Naive thymus-derived CD4-positive, alpha-beta T cell (primary cell): ENCODE measurements at regions of chr22 and their contacts with region 1.

Region 1: DNA sequence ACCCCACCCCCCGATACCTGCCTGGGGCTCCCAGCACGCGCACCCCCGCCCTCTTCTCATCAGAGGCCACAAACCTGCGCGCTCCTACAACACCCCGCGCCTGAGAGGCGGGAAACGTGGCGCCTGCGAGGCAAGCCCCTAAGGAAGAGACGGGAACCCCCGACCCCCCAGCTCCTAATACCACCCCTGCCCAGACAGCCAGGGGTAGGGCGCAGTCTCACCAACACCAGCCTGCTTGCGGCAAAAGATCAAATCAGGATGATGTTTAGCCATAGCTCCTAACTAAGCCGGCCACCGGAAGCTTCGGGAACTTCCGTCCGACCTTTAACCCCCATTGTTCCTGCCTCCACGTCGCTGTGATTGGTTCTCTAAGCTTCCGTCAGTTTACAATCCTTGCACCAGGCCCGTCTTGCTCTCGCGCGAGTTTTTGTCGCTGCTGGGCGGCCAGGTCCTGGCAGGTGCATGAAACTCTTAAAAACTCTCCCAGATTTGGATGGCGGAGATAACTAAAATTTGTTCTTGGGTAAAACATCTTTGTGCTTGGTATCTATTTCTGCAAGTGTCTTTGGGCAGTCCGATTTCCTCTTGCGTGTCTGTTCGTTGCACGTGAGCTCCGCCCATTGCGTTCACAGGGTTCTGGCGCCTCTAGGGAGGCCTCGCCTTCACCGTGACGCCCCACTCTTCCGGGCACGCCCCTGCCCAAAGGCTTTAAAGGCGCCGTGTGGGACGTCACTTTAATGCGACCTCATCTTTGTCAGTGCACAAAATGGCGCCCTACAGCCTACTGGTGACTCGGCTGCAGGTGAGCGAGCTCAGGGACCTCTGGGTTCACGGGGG is at the starts of genes ACO2 and PHF5A:
- DNase-seq: peak; percentile 93 to 99 (median 98)
- ATAC-seq: peak; percentile 96
- H3K4me3 ChIP-seq: peak within 1 kb of the TSS; percentile 76
- H3K4me3 Mint-ChIP-seq: peak within 1 kb of the TSS; percentile 88 to 94 (median 91)
- H3K27ac ChIP-seq: peak within 1 kb of the TSS; percentile 89
- H3K27ac Mint-ChIP-seq: peak within 1 kb of the TSS; percentile 98 to 100 (median 99)
- H3K4me1 ChIP-seq: peaks cover 19 to 20% of the 10 kb centered on the region in 2 donors
- H3K4me1 Mint-ChIP-seq: peaks cover 18 to 75% (median 59%) of the 10 kb centered on the region in 7 donors
- H3K27me3 ChIP-seq: no peaks in the 10 kb centered on the region
- H3K27me3 Mint-ChIP-seq: no peaks in the 10 kb centered on the region
- total RNA-seq, gene ACO2: 64.5 to 84.8 (median 70.3) TPM
- total RNA-seq, gene PHF5A: 27.8 to 63.9 (median 36.0) TPM

Region 2: DNA sequence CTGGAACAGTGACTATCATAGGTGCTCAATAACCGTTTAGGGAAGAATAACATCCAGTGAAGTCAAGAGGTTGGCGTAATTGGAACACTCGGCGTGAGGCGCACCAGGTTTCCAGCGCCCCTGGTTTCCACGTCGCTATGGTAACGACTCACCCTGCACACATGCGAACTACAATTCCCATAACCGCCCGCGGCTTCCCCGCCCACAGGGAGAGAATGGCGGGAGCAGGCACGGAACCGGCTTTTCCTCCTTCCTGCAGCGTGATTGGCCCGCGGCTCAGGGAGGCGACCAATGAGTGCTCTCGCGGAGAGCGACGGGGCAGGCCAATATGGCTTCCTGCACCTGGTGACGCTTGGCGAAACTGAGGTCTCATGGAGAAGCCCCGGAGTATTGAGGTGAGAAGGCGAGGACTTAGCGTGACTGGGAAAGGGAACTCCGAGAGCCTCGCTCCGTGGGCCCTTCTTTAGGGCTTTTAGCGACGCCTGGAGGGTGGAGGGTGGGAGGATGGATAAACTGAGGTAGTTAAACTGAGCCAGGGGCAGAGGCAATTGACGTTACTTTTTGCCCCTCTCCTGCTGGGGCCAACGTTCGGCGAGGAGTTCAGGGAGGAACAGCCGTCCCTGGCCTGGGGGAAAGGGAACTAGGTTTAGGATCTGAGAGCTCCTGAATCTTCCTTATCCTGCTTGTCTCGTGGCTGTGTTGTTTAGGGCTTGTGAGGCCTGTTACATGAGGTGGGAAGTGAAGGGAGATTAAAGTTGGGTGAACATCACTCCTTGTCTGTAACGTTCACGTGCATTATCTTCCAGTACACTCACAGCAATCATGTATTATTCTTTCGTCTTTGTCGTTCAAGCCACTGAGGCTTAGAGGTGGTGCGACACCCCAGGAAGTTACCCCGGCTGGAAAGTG is 263.4 kb before region 1 on chr22 and contains the start of gene L3MBTL2:
- CTCF ChIA-PET with region 1: no interaction called
- POLR2A ChIA-PET with region 1: no interaction called
- intact Hi-C with region 1: loop called in 1 of 2 experiments (anchors 1 kb)
- DNase-seq: peak; percentile 89 to 99 (median 97)
- ATAC-seq: peak; percentile 100
- H3K4me3 ChIP-seq: peak within 1 kb of the TSS; percentile 94
- H3K4me3 Mint-ChIP-seq: peak within 1 kb of the TSS; percentile 87 to 100 (median 96)
- H3K27ac ChIP-seq: peak within 1 kb of the TSS; percentile 85
- H3K27ac Mint-ChIP-seq: peak within 1 kb of the TSS; percentile 88 to 98 (median 92)
- H3K4me1 ChIP-seq: peaks cover 4 to 10% of the 10 kb centered on the region in 2 donors
- H3K4me1 Mint-ChIP-seq: peaks cover 10 to 40% (median 36%) of the 10 kb centered on the region in 7 donors
- H3K27me3 ChIP-seq: no peaks in the 10 kb centered on the region
- H3K27me3 Mint-ChIP-seq: peaks cover 0 to 26% (median 0%) of the 10 kb centered on the region in 5 donors
- total RNA-seq, gene L3MBTL2: 31.6 to 45.9 (median 43.3) TPM

Region 3: DNA sequence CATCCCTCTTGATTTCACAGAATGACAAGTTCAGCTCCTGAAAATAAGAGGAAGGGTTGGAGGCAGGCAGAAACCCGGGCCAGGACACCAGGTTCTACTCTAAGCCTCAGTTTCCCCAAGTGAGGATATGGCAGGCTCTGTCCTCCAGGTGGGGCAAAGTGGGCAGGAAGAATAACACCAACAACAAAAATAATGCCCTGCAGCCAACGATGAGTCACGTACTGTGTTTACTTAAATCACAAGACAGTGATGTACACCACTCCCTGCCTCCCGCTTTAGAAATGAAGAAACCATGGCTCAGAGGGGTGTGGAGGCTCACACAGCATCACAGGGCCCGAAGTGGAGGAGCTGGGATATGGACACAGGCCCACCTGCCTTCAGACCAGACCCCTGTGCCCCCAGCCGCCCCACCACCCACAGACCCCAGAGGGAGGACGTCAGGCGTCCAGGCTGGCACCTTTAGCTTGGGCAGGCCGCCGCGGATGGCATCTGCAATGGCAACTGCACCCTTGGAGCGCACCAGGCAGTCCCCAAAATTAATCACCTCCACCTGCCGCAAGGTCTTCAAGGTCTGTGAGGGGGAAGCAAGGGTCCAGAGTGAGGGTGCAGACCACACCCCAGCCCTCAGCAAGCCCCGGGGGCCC is 212.2 kb before region 1 on chr22:
- CTCF ChIA-PET with region 1: no interaction called
- POLR2A ChIA-PET with region 1: no interaction called
- intact Hi-C with region 1: no loop called
- DNase-seq: no peak
- ATAC-seq: no peak
- H3K4me3 ChIP-seq: no peak overlapping the region
- H3K4me3 Mint-ChIP-seq: no peak overlapping the region
- H3K27ac ChIP-seq: no peak overlapping the region
- H3K27ac Mint-ChIP-seq: peak overlapping the region in 2 of 9 donors; percentile 30 to 43
- H3K4me1 ChIP-seq: no peaks in the 10 kb centered on the region
- H3K4me1 Mint-ChIP-seq: peaks cover 0 to 2% (median 0%) of the 10 kb centered on the region in 7 donors
- H3K27me3 ChIP-seq: no peaks in the 10 kb centered on the region
- H3K27me3 Mint-ChIP-seq: no peaks in the 10 kb centered on the region

Region 4: DNA sequence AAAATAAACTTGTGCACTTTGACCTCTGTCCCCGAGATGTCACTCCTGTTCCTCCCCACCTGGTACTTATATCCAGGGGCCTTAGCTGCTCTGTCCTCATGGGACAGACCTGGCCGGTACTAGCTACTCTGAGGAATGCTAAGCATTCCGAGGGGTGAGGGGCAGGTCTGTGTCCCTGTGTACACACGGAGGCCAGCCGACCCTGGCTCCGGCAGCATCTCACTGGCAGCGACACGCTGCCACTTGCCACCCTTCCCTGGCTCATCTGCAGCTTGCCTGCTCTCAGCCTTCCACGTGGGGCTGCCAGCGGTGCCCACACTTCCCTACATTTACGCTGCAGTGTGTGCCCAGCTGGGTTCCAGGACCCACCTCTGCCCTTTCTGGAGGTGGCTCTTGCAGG is 108.5 kb before region 1 on chr22:
- CTCF ChIA-PET with region 1: no interaction called
- POLR2A ChIA-PET with region 1: no interaction called
- intact Hi-C with region 1: no loop called
- DNase-seq: no peak
- ATAC-seq: no peak
- H3K4me3 ChIP-seq: no peak overlapping the region
- H3K4me3 Mint-ChIP-seq: no peak overlapping the region
- H3K27ac ChIP-seq: no peak overlapping the region
- H3K27ac Mint-ChIP-seq: peak overlapping the region in 3 of 9 donors; percentile 17 to 72 (median 70)
- H3K4me1 ChIP-seq: no peaks in the 10 kb centered on the region
- H3K4me1 Mint-ChIP-seq: no peaks in the 10 kb centered on the region
- H3K27me3 ChIP-seq: no peaks in the 10 kb centered on the region
- H3K27me3 Mint-ChIP-seq: no peaks in the 10 kb centered on the region

Region 5: DNA sequence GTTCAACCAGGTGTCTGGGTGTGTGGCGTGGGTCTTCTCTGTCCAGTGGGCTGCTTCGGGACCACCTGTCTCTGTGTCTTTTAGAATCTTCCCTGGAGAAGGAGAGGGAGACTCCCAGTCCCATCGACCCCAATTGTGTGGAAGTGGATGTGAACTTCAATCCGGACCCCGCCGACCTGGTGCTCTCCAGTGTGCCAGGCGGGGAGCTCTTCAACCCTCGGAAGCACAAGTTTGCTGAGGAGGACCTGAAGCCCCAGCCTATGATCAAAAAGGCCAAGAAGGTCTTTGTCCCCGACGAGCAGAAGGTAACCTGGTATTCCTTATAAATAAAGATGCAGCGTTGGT is 74.6 kb before region 1 on chr22:
- CTCF ChIA-PET with region 1: no interaction called
- POLR2A ChIA-PET with region 1: no interaction called
- intact Hi-C with region 1: no loop called
- DNase-seq: no peak
- ATAC-seq: no peak
- H3K4me3 ChIP-seq: no peak overlapping the region
- H3K4me3 Mint-ChIP-seq: no peak overlapping the region
- H3K27ac ChIP-seq: no peak overlapping the region
- H3K27ac Mint-ChIP-seq: no peak overlapping the region
- H3K4me1 ChIP-seq: no peaks in the 10 kb centered on the region
- H3K4me1 Mint-ChIP-seq: no peaks in the 10 kb centered on the region
- H3K27me3 ChIP-seq: no peaks in the 10 kb centered on the region
- H3K27me3 Mint-ChIP-seq: no peaks in the 10 kb centered on the region

Region 6: GRCh38 chr22:41479671-41480396 is 11.2 kb after region 1 on chr22:
- CTCF ChIA-PET with region 1: interaction called, 3 read pairs
- POLR2A ChIA-PET with region 1: interaction called, 21 read pairs
- intact Hi-C with region 1: no loop called
- DNase-seq: no peak
- ATAC-seq: no peak
- H3K4me3 ChIP-seq: no peak overlapping the region
- H3K4me3 Mint-ChIP-seq: no peak overlapping the region
- H3K27ac ChIP-seq: no peak overlapping the region
- H3K27ac Mint-ChIP-seq: no peak overlapping the region
- H3K4me1 ChIP-seq: no peaks in the 10 kb centered on the region
- H3K4me1 Mint-ChIP-seq: peaks cover 11 to 47% (median 35%) of the 10 kb centered on the region in 7 donors
- H3K27me3 ChIP-seq: no peaks in the 10 kb centered on the region
- H3K27me3 Mint-ChIP-seq: no peaks in the 10 kb centered on the region

Region 7: GRCh38 chr22:41526837-41527799 is 58.5 kb after region 1 on chr22:
- CTCF ChIA-PET with region 1: interaction called, 3 read pairs
- POLR2A ChIA-PET with region 1: interaction called, 5 read pairs
- intact Hi-C with region 1: loop called (anchors 1 to 2 kb)
- DNase-seq: peak; percentile 36 to 75 (median 64)
- ATAC-seq: peak; percentile 78
- H3K4me3 ChIP-seq: no peak overlapping the region
- H3K4me3 Mint-ChIP-seq: no peak overlapping the region
- H3K27ac ChIP-seq: peak overlapping the region; percentile 48
- H3K27ac Mint-ChIP-seq: peak overlapping the region in 7 of 9 donors; percentile 40 to 84 (median 77)
- H3K4me1 ChIP-seq: peaks cover 10 to 16% of the 10 kb centered on the region in 2 donors
- H3K4me1 Mint-ChIP-seq: peaks cover 0 to 25% (median 20%) of the 10 kb centered on the region in 7 donors
- H3K27me3 ChIP-seq: no peaks in the 10 kb centered on the region
- H3K27me3 Mint-ChIP-seq: no peaks in the 10 kb centered on the region

Region 8: GRCh38 chr22:41543854-41544670 is 75.5 kb after region 1 on chr22 and contains the start of gene POLR3H:
- CTCF ChIA-PET with region 1: no interaction called
- POLR2A ChIA-PET with region 1: no interaction called
- intact Hi-C with region 1: loop called (anchors 1 to 5 kb)
- DNase-seq: peak; percentile 89 to 97 (median 95)
- ATAC-seq: peak; percentile 100
- H3K4me3 ChIP-seq: peak within 1 kb of the TSS; percentile 96
- H3K4me3 Mint-ChIP-seq: peak within 1 kb of the TSS; percentile 82 to 100 (median 97)
- H3K27ac ChIP-seq: peak within 1 kb of the TSS; percentile 84
- H3K27ac Mint-ChIP-seq: peak within 1 kb of the TSS; percentile 88 to 98 (median 95)
- H3K4me1 ChIP-seq: peaks cover 7 to 15% of the 10 kb centered on the region in 2 donors
- H3K4me1 Mint-ChIP-seq: peaks cover 30 to 52% (median 45%) of the 10 kb centered on the region in 7 donors
- H3K27me3 ChIP-seq: no peaks in the 10 kb centered on the region
- H3K27me3 Mint-ChIP-seq: no peaks in the 10 kb centered on the region
- total RNA-seq, gene POLR3H: 21.7 to 59.6 (median 28.5) TPM

Region 9: GRCh38 chr22:41732096-41732772 is 263.6 kb after region 1 on chr22:
- CTCF ChIA-PET with region 1: no interaction called
- POLR2A ChIA-PET with region 1: no interaction called
- intact Hi-C with region 1: no loop called
- DNase-seq: no peak
- ATAC-seq: no peak
- H3K4me3 ChIP-seq: no peak overlapping the region
- H3K4me3 Mint-ChIP-seq: no peak overlapping the region
- H3K27ac ChIP-seq: no peak overlapping the region
- H3K27ac Mint-ChIP-seq: no peak overlapping the region
- H3K4me1 ChIP-seq: no peaks in the 10 kb centered on the region
- H3K4me1 Mint-ChIP-seq: no peaks in the 10 kb centered on the region
- H3K27me3 ChIP-seq: no peaks in the 10 kb centered on the region
- H3K27me3 Mint-ChIP-seq: peaks cover 0 to 14% (median 0%) of the 10 kb centered on the region in 5 donors